Heart left ventricle (tissue), 16 donors: ENCODE measurements at regions of chr18 and their contacts with region 1.

Region 1: DNA sequence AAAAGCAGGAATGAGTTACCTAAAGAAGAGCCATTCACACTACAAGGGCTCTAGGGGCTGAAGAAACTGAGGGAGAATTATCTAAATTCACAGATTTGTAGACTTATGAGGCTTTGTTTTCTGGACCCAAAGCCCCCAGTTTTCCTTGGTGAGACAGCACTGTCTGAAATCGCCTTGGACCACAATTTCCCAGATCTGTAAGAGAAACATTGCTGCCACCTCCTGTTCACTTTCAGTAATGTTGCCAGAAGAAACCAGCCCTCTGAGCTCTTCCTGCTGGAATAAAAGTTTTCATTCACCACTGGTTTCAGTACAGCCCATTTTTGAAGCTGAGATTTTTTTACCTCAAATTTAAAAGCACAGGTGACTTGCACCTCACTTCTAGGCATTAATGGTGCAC is 169.2 kb downstream of the CDH20 start:
- DNase-seq: peak in 2 of 5 donors; percentile 15 to 27
- ATAC-seq: peak in 3 of 4 donors; percentile 26 to 68 (median 54)
- H3K4me3 ChIP-seq: no peak overlapping the region
- H3K27ac ChIP-seq: no peak overlapping the region
- H3K4me1 ChIP-seq: peaks cover 0 to 7% (median 0%) of the 10 kb centered on the region in 12 donors
- H3K27me3 ChIP-seq: peaks cover 0 to 4% (median 0%) of the 10 kb centered on the region in 9 donors
- CTCF ChIP-seq: peak; percentile 50 to 78 (median 66)
- POLR2A ChIP-seq: no peak

Region 2: GRCh38 chr18:60684843-60685513 is 817.5 kb before region 1 on chr18:
- intact Hi-C with region 1: loop called in 9 of 10 experiments (anchors 1 to 10 kb)
- DNase-seq: peak in 1 of 5 donors; percentile 46
- ATAC-seq: no peak
- H3K4me3 ChIP-seq: no peak overlapping the region
- H3K27ac ChIP-seq: no peak overlapping the region
- H3K4me1 ChIP-seq: no peaks in the 10 kb centered on the region
- H3K27me3 ChIP-seq: peaks cover 0 to 3% (median 0%) of the 10 kb centered on the region in 9 donors
- CTCF ChIP-seq: peak; percentile 48 to 79 (median 65)
- POLR2A ChIP-seq: no peak

Region 3: DNA sequence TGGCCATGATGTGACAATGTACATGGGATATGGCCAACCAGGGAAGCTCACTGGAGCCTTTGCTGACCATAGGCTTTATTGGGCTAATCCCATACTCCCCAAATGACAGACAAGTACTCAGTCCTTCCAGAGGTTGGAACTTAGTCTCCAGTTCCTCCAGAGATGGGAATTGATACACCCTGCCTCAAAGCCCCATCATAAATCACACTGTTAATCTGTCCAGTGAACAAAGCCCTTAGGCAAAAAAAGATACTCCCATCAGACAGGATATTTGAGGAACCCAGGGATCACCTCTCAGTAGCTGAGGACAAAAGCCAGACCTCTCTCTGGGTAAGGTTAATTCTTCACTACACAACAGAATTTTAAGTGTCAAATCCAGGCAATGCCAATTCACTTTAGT is 416.7 kb before region 1 on chr18:
- intact Hi-C with region 1: loop called in 7 of 10 experiments (anchors 5 to 10 kb)
- DNase-seq: no peak
- ATAC-seq: no peak
- H3K4me3 ChIP-seq: no peak overlapping the region
- H3K27ac ChIP-seq: no peak overlapping the region
- H3K4me1 ChIP-seq: no peaks in the 10 kb centered on the region
- H3K27me3 ChIP-seq: no peaks in the 10 kb centered on the region
- CTCF ChIP-seq: no peak
- POLR2A ChIP-seq: no peak

Region 4: GRCh38 chr18:61322265-61322873 is 180.1 kb before region 1 on chr18:
- intact Hi-C with region 1: loop called (anchors 2 to 5 kb)
- DNase-seq: peak; percentile 35 to 73 (median 38)
- ATAC-seq: peak; percentile 67 to 86 (median 80)
- H3K4me3 ChIP-seq: no peak overlapping the region
- H3K27ac ChIP-seq: no peak overlapping the region
- H3K4me1 ChIP-seq: no peaks in the 10 kb centered on the region
- H3K27me3 ChIP-seq: peaks cover 0 to 4% (median 0%) of the 10 kb centered on the region in 9 donors
- CTCF ChIP-seq: peak; percentile 35 to 81 (median 61)
- POLR2A ChIP-seq: no peak

Region 5: GRCh38 chr18:61448316-61448715 is 54.2 kb before region 1 on chr18:
- intact Hi-C with region 1: no loop called
- DNase-seq: no peak
- ATAC-seq: no peak
- H3K4me3 ChIP-seq: no peak overlapping the region
- H3K27ac ChIP-seq: no peak overlapping the region
- H3K4me1 ChIP-seq: no peaks in the 10 kb centered on the region
- H3K27me3 ChIP-seq: no peaks in the 10 kb centered on the region
- CTCF ChIP-seq: no peak
- POLR2A ChIP-seq: no peak

Region 6: DNA sequence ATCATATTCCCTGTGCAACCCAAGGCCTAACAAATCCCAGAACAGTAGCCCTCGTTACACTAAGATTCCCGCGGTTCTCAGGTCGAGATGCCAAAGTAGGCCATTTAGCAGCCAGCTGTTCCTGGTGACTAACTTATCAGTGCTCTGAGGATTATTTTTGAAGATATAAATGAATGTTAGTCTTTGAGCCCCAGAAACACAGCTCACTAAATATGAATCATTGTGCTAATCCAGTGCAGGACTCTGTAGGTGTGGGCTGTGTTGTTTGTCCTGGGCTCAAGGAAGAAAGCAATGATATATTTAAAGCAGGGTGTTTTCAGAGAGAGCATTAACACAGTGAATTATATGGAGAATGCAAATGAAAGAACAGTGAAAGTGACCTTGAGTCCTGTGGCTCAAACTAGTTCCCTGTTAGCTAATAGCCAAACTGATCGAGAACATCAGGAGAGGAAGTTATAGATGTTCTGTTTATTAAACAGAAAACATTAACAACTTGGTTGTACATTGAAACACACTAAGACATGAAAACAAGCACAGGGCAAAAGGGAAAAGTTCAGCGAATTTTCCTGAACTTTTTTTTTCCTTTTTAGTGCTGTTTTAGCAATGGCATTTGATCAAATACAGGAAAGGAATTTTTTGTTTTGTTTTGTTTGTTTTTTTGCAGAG is 162.1 kb after region 1 on chr18:
- intact Hi-C with region 1: no loop called
- DNase-seq: no peak
- ATAC-seq: no peak
- H3K4me3 ChIP-seq: no peak overlapping the region
- H3K27ac ChIP-seq: no peak overlapping the region
- H3K4me1 ChIP-seq: peaks cover 0 to 11% (median 0%) of the 10 kb centered on the region in 12 donors
- H3K27me3 ChIP-seq: no peaks in the 10 kb centered on the region
- CTCF ChIP-seq: no peak
- POLR2A ChIP-seq: no peak